GM10248 (cell line): ENCODE measurements at regions of chr20 and their contacts with region 1.

Region 1: DNA sequence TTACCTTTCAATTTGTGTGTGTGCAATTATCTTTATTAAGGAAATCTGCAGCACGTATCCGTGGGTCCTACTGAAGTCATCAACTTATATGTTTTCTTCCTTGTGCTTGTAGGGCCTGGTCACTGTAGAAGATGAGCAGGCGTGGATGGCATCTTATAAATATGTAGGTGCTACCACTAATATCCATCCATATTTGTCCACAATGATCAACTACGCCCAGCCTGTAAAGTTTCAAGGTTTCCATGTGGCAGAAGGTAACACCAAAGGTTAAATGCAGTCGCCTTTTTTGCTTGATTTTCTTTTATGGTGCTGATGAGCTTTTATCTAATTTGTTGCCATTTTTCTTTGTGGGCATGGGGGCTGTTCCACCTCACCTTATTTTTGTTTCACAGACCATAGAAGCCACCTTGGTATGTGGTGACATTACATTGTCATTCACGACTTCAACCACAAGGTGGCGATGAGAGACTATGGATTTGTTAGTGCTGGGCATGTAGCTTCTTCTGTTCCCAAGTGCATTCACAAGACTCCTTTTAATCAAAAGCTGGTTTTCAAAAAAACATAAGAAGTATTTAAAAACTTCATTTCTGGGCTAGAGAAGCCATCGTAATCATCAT is 106.5 kb upstream of the LAMP5 start:
- DNase-seq: peak; percentile 54
- CTCF ChIP-seq: peak; percentile 80

Region 2: GRCh38 chr20:9424551-9424950 is 16.6 kb after region 1 on chr20:
- CTCF ChIA-PET with region 1: interaction called, 34 read pairs
- POLR2A ChIA-PET with region 1: no interaction called
- DNase-seq: no peak
- CTCF ChIP-seq: no peak

Region 3: DNA sequence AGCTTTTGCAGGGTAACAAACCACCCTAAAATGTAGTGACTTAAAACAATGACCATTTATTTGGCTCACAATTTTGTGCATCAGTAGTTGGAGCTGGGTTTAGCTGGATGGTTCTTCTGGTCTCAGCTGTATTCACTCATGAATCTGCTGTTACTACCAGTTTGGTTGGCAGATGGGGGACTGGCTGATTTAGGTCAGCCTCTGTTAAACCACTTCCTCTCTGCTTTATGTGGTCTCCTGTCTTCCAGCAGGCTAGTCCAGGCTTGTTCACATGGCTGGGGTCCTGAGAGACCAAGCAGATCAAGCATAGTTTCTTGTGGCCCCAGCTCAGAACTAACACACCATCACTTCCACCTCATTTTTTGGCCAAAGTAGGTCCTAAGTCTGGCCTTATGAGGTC is 39.3 kb after region 1 on chr20:
- CTCF ChIA-PET with region 1: interaction called, 20 read pairs
- POLR2A ChIA-PET with region 1: no interaction called
- DNase-seq: no peak
- CTCF ChIP-seq: no peak

Region 4: GRCh38 chr20:9609887-9610502 is 202.1 kb after region 1 on chr20:
- CTCF ChIA-PET with region 1: interaction called, 193 read pairs
- POLR2A ChIA-PET with region 1: no interaction called
- DNase-seq: peak; percentile 42
- CTCF ChIP-seq: peak; percentile 55

Region 5: DNA sequence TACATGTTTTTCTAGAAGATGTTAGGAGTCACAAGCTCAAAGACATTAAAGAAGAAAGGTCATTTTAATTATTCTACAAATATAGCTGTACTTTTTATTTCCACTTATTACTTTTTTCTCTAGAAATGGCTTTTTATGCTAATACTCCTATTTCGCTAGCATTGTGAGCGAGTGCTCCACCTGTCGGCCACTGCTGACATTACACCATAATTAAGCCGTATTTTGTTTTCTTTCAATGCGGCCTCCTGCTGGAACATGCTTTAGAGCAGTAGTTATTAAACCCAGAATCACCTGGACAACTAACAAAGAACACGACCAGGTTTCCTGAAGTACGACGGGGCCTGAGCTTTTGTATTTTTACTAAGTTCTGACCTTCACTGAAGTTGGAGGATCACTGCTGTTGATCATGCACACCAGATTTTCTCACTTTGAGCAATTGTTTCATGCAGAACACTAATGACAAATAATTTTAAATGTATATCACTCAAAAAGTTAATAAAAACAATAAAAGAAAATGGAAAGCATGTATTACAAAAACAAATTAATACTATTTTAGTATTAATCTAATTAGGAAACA is 505.0 kb after region 1 on chr20:
- CTCF ChIA-PET with region 1: interaction called, 12 read pairs
- POLR2A ChIA-PET with region 1: no interaction called
- DNase-seq: peak; percentile 24
- CTCF ChIP-seq: peak; percentile 92